ENCODE measurements at regions of chr6 and their contacts with region 1.

Region 1: DNA sequence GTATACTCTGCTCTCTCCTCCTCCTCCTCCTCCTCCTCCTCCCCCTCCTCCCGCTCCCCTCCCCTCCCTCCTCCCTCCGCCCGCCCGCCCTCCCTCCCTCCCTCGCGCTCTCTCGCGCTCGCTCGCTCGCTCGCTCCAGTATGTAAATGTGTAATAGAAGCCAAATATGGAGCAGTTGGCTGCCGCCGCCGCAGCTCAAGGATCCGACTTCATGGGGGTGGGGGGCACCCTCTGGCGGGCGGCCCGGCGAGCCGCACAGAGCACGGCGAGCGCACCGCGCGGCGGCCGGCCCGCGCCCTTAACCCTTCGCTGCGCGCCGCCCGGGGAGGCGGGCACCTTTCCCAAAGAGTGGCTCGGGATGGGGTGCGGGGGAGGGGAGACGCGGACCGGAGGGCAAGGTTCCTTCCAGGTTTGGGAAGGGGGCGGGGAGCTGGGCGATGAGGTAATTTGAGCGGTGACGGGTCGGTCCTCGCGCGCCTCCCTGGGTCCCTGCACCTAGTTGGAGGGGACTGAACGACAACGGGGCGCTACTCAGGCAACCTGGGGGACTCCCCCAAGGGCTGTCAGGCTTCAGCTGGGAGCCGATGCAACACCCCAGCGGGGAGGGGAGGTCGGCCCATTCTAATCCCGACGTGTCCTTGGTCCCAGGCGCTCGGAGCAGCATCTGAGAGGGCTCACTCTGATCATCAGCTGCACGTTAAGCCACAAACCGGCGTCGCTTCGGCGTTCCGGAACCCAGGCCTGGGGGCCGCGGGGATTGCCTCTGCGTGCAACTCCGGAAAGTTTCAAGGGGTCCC is 409 bp upstream of the ATXN1 start:
- DNase-seq: peak; percentile 68 to 92 (median 81)
- ATAC-seq: peak; percentile 72
- H3K4me3 ChIP-seq: peak overlapping the region; percentile 91
- H3K4me3 Mint-ChIP-seq: peak overlapping the region; percentile 87 to 100 (median 98)
- H3K27ac ChIP-seq: peak overlapping the region; percentile 95
- H3K27ac Mint-ChIP-seq: peak overlapping the region; percentile 95 to 100 (median 97)
- H3K4me1 ChIP-seq: peaks cover 7 to 34% of the 10 kb centered on the region in 2 donors
- H3K4me1 Mint-ChIP-seq: peaks cover 18 to 61% (median 42%) of the 10 kb centered on the region in 7 donors
- H3K27me3 ChIP-seq: no peaks in the 10 kb centered on the region
- H3K27me3 Mint-ChIP-seq: peaks cover 0 to 4% (median 0%) of the 10 kb centered on the region in 5 donors

Region 2: GRCh38 chr6:16319813-16320532 is 441.7 kb before region 1 on chr6:
- CTCF ChIA-PET with region 1: interaction called, 4 read pairs
- POLR2A ChIA-PET with region 1: interaction called, 7 read pairs
- intact Hi-C with region 1: loop called (anchors 1 kb)
- DNase-seq: peak; percentile 33 to 91 (median 79)
- ATAC-seq: peak; percentile 70
- H3K4me3 ChIP-seq: peak overlapping the region; percentile 43
- H3K4me3 Mint-ChIP-seq: peak overlapping the region; percentile 67 to 86 (median 78)
- H3K27ac ChIP-seq: peak overlapping the region; percentile 84
- H3K27ac Mint-ChIP-seq: peak overlapping the region; percentile 91 to 97 (median 95)
- H3K4me1 ChIP-seq: peaks cover 58 to 72% of the 10 kb centered on the region in 2 donors
- H3K4me1 Mint-ChIP-seq: peaks cover 41 to 78% (median 74%) of the 10 kb centered on the region in 7 donors
- H3K27me3 ChIP-seq: no peaks in the 10 kb centered on the region
- H3K27me3 Mint-ChIP-seq: no peaks in the 10 kb centered on the region

Region 3: DNA sequence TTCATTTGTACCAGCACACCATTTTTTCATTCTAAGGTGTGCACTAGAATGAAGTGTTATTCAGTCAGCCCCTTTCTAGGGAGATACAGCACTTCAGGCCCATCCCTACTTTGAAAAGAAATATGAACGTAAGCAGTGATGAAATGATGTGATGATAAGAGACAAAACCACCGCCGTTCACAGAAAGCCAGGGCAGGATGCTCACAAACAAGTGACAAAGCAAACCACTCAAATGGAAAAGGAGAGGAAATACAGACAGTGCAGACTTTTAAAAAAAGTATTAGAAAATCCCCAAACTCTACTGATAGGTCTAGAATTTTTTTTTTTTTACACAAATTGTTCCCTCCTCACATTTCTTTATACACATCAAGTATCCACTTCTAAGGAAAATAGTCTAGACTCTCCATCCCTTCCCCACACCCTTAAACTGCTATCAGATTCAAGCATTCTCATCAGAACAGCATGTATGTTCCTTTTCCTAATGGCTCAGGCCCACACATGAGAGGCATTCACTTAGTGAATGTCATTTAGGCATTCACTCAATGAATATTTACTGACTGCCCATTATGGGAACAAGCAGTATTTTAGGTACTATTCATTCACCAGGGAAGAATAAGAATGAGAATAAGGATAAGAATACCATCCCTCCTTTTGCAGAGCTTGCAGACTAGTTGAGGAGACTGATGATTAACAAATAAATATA is 279.8 kb before region 1 on chr6:
- CTCF ChIA-PET with region 1: no interaction called
- POLR2A ChIA-PET with region 1: no interaction called
- intact Hi-C with region 1: loop called (anchors 1 kb)
- DNase-seq: peak in 8 of 9 donors; percentile 51 to 90 (median 83)
- ATAC-seq: peak; percentile 86
- H3K4me3 ChIP-seq: no peak overlapping the region
- H3K4me3 Mint-ChIP-seq: peak overlapping the region in 9 of 10 donors; percentile 1 to 70 (median 46)
- H3K27ac ChIP-seq: peak overlapping the region; percentile 75
- H3K27ac Mint-ChIP-seq: peak overlapping the region; percentile 64 to 96 (median 91)
- H3K4me1 ChIP-seq: peaks cover 33 to 64% of the 10 kb centered on the region in 2 donors
- H3K4me1 Mint-ChIP-seq: peaks cover 29 to 87% (median 56%) of the 10 kb centered on the region in 7 donors
- H3K27me3 ChIP-seq: no peaks in the 10 kb centered on the region
- H3K27me3 Mint-ChIP-seq: no peaks in the 10 kb centered on the region

Region 4: DNA sequence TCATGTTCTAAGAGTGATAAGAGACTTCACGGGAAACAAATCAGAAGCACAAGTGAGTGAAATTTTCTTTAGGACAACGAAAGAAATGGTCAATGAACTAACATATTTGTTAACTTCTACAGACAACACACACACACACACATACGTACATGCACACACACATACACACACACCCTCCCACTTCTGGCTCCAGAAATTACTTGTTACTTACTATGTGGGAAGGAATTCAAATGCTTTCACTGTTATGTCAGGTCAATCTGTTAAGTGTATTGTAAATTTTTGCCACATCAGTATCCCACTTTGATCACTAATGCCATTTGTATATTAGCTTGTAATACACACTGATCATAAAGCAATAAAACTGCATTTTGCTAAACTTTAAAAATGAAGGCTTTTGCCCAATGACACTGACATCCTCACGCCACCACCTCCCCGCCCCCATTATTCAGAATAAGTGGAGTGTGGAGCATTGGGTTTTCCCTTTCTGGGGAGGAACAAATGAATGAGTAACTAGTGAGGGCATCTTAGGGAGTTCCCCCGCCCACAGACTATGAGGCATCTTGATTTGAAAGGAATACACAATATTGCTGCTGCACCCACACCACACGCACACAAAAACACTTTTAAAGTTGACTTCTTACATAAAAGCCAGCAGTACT is 76.6 kb before region 1 on chr6:
- CTCF ChIA-PET with region 1: no interaction called
- POLR2A ChIA-PET with region 1: no interaction called
- intact Hi-C with region 1: loop called in 1 of 2 experiments (anchors 1 kb)
- DNase-seq: peak in 3 of 9 donors; percentile 14 to 85 (median 52)
- ATAC-seq: peak; percentile 70
- H3K4me3 ChIP-seq: no peak overlapping the region
- H3K4me3 Mint-ChIP-seq: peak overlapping the region in 1 of 10 donors; percentile 54
- H3K27ac ChIP-seq: no peak overlapping the region
- H3K27ac Mint-ChIP-seq: peak overlapping the region in 3 of 9 donors; percentile 23 to 63 (median 30)
- H3K4me1 ChIP-seq: peaks cover 0 to 32% of the 10 kb centered on the region in 2 donors
- H3K4me1 Mint-ChIP-seq: peaks cover 4 to 70% (median 18%) of the 10 kb centered on the region in 7 donors
- H3K27me3 ChIP-seq: no peaks in the 10 kb centered on the region
- H3K27me3 Mint-ChIP-seq: no peaks in the 10 kb centered on the region

Region 5: DNA sequence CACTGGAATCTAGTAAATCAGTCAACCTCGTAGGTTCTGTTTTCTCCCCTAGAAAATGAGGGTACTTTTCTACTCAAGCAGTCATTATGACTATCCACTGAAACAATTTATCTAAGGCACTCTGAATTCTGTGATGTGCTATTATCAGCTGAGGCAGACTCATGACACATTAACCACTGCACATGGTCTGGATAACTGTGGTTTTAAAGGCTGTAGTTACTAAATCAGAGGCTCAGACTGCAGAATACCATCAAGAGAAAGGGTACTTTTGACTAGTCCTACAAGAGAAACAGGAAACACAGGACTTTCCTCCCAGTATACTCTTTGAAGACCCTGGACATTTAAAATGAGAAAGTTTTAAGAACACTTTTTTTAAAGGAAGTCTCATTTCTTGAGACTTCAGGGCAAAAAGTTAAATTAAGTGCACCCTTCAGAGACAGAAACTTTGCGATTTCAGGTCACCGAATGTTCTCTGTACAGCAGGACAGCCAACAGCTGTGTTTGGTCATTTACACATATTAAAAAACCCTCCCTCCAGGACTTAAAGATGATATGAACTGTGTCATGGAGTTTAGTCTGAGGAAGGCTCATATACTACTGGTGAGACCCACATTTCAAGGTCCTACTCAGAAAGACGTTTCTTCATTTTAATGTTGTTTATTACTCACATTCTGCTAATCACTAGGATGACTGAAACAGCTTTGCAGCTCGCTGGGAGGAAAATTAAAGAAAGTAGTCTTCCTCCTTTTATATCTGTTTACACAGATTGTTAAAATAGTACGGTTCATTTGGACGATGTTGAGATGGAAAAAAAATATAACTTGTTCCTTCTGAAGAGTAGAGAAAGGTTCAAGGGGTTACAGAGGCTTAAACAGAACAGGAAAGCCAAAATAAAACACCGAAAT is 20.3 kb before region 1 on chr6:
- CTCF ChIA-PET with region 1: interaction called, 13 read pairs
- POLR2A ChIA-PET with region 1: interaction called, 6 read pairs
- intact Hi-C with region 1: no loop called
- DNase-seq: no peak
- ATAC-seq: peak; percentile 72
- H3K4me3 ChIP-seq: no peak overlapping the region
- H3K4me3 Mint-ChIP-seq: no peak overlapping the region
- H3K27ac ChIP-seq: no peak overlapping the region
- H3K27ac Mint-ChIP-seq: peak overlapping the region in 1 of 9 donors; percentile 43
- H3K4me1 ChIP-seq: peaks cover 0 to 16% of the 10 kb centered on the region in 2 donors
- H3K4me1 Mint-ChIP-seq: peaks cover 20 to 66% (median 33%) of the 10 kb centered on the region in 7 donors
- H3K27me3 ChIP-seq: no peaks in the 10 kb centered on the region
- H3K27me3 Mint-ChIP-seq: no peaks in the 10 kb centered on the region

Region 6: DNA sequence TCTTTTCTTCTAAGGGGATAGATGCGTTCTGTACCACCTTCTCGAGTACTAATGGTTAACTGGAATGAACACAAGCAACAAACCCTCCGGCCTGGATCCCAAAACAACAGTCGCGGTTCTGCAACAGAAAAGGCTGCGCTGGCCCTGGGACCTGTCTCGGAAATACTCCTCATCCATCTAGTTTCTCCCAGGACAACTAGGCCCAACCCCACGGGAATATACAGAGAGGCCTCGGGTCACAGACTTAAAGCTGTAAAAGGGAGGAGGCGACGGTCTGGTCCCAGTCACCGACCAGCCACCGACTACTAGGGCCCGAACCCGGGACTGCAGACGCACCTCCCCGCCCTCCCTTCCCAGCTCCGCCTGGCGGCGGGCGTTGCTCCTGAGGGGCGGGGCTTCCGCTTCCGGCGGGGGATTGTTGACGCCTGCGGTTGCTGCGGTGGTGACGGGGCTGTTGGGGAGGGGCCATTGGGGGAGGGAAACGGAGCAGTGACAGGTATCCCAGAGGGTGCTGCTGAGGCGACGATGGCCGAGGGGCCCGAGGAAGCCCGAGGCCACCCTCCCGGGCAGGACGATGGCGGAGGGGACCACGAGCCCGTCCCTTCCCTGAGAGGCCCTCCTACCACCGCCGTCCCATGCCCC is 838.3 kb after region 1 on chr6 and contains the start of gene FAM8A1:
- CTCF ChIA-PET with region 1: interaction called, 3 read pairs
- POLR2A ChIA-PET with region 1: no interaction called
- intact Hi-C with region 1: loop called in 1 of 2 experiments (anchors 2 kb)
- DNase-seq: peak; percentile 91 to 97 (median 94)
- ATAC-seq: peak; percentile 97
- H3K4me3 ChIP-seq: peak within 1 kb of the TSS; percentile 49
- H3K4me3 Mint-ChIP-seq: peak within 1 kb of the TSS; percentile 85 to 97 (median 94)
- H3K27ac ChIP-seq: peak within 1 kb of the TSS; percentile 94
- H3K27ac Mint-ChIP-seq: peak within 1 kb of the TSS; percentile 84 to 96 (median 93)
- H3K4me1 ChIP-seq: peaks cover 19 to 29% of the 10 kb centered on the region in 2 donors
- H3K4me1 Mint-ChIP-seq: peaks cover 29 to 48% (median 45%) of the 10 kb centered on the region in 7 donors
- H3K27me3 ChIP-seq: no peaks in the 10 kb centered on the region
- H3K27me3 Mint-ChIP-seq: no peaks in the 10 kb centered on the region
- total RNA-seq, gene FAM8A1: 8.0 to 26.1 (median 21.1) TPM

Region 7: DNA sequence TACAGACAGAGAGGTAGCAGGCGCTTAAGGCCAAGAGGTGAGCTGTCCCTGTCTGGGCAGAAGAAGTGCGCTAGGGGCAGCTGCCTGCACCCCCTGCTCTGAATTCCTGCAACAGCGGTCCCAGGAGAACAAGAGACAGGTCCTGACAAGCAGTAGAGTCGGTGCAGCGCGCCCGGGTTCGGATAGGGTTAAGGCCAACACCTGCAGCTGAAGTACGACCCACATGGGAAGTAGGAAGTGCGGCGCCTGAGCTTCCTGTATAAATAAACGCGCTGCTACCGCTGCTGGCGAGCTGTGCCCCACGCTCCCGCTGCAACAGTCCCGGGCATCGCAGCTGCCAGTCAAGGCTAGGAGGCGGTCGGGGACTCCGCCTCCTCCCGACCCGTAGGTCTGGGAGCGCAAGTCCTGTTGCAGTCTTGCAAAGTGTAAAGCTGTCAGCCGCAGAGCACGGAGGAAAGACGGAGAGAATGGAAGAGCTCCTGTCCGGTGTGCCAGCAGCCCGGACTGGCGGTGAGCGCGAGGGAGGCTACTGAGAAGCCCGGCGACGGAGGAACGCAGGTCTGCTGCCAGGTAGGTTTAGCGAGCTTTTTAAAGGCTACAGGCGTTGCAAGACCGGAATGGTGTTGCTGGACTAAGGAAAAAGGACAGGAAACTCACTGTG is 1625.5 kb after region 1 on chr6 and contains the start of gene RNF144B:
- CTCF ChIA-PET with region 1: no interaction called
- POLR2A ChIA-PET with region 1: no interaction called
- intact Hi-C with region 1: loop called in 1 of 2 experiments (anchors 5 kb)
- DNase-seq: peak; percentile 41 to 73 (median 67)
- ATAC-seq: peak; percentile 92
- H3K4me3 ChIP-seq: peak within 1 kb of the TSS; percentile 70
- H3K4me3 Mint-ChIP-seq: peak within 1 kb of the TSS; percentile 90 to 100 (median 99)
- H3K27ac ChIP-seq: peak within 1 kb of the TSS; percentile 69
- H3K27ac Mint-ChIP-seq: peak within 1 kb of the TSS; percentile 2 to 95 (median 92)
- H3K4me1 ChIP-seq: peaks cover 4 to 18% of the 10 kb centered on the region in 2 donors
- H3K4me1 Mint-ChIP-seq: peaks cover 15 to 48% (median 35%) of the 10 kb centered on the region in 7 donors
- H3K27me3 ChIP-seq: no peaks in the 10 kb centered on the region
- H3K27me3 Mint-ChIP-seq: peaks cover 0 to 21% (median 0%) of the 10 kb centered on the region in 5 donors
- total RNA-seq, gene RNF144B: 1.5 to 23.5 (median 7.9) TPM